Endothelial cell of umbilical vein (primary cell): ENCODE measurements at regions of chr7 and their contacts with region 1.

Region 1: GRCh38 chr7:138738551-138739335 is 37.6 kb upstream of the SVOPL start:
- DNase-seq: peak; percentile 89
- H3K4me3 ChIP-seq: no peak overlapping the region
- H3K27ac ChIP-seq: no peak overlapping the region
- H3K4me1 ChIP-seq: no peaks in the 10 kb centered on the region
- H3K27me3 ChIP-seq: no peaks in the 10 kb centered on the region
- CTCF ChIP-seq: peak; percentile 89 to 96
- POLR2A ChIP-seq: no peak

Region 2: DNA sequence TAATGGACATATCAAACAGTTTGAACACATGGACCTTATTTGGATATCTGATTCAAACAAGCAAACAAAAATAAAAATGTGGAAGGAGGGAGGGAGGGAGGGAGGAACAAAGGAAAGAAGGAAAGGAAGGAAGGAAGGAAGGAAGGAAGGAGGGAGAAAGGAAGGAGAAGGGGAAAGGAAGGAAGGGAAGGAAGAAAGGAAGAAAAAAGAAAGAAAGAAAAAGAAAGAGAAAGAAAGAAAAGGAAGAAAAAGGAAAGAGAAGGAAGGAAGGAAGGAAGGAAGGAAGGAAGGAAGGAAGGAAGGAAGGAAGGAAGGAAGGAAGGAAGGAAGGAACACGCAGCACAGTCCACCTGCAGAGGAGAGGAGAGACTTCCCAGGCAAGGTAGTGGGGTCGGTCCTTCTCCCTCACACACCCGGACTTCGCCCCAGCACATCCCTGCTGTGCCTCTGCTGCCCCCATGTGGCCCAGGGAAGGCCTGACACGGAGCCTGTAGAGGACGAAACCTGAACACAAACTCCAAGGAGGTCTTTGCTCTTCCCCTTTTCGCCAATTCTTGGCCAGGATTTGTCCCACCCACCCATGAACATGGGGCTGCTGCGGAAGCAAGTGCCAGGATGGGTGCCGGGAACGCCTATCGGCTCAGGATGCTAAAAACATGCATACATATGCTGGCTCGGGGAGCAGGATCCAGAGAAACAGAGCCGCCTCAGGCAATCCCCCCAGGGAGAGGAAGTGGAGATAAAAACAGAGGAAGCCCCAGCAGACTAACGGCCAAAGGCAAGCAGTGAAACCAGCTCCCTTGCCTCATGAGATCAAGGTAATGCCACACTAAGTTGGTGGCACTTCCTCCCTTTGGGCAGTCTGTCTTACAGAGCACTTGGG is 839.7 kb before region 1 on chr7:
- CTCF ChIA-PET with region 1: interaction called, 17 read pairs
- POLR2A ChIA-PET with region 1: no interaction called
- dilution Hi-C with region 1: no loop called
- intact Hi-C with region 1: no loop called
- DNase-seq: peak; percentile 73
- H3K4me3 ChIP-seq: no peak overlapping the region
- H3K27ac ChIP-seq: no peak overlapping the region
- H3K4me1 ChIP-seq: peaks cover 2% of the 10 kb centered on the region
- H3K27me3 ChIP-seq: no peaks in the 10 kb centered on the region
- CTCF ChIP-seq: peak; percentile 91 to 98
- POLR2A ChIP-seq: no peak

Region 3: DNA sequence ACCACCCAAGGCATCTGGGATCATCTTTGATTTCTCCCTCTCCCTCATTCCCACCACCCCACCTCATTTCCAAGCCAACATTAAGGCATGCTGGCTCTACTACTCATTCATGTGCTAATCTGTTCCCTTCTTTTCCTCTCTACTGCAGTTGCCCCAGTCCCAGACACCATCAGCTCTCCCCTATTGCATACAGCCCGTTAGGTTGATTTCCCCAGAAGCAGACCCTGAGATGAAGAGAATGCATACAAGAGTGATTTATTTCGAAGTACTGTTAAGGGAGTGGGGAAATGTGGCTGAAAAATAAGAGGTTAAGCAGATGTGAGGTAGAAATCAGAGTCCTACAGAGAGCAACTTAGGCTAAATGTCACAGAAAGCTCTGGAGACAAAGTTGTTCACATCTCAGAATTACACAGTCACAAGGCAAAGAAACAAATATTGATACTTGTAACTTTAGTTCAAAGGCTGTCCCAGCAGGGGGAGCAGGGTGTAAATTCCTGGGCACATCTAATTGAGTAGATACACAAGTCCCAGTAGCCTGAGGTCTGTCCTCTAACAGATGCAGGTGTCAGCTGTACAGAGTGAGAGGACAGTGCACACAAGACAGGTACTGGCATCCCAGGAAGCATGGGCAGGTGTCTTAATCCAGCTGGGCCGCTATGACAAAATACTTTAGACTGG is 641.5 kb before region 1 on chr7:
- CTCF ChIA-PET with region 1: interaction called, 11 read pairs
- POLR2A ChIA-PET with region 1: no interaction called
- dilution Hi-C with region 1: no loop called
- intact Hi-C with region 1: loop called (anchors 1 kb)
- DNase-seq: peak; percentile 6
- H3K4me3 ChIP-seq: no peak overlapping the region
- H3K27ac ChIP-seq: no peak overlapping the region
- H3K4me1 ChIP-seq: no peaks in the 10 kb centered on the region
- H3K27me3 ChIP-seq: no peaks in the 10 kb centered on the region
- CTCF ChIP-seq: no peak
- POLR2A ChIP-seq: no peak

Region 4: DNA sequence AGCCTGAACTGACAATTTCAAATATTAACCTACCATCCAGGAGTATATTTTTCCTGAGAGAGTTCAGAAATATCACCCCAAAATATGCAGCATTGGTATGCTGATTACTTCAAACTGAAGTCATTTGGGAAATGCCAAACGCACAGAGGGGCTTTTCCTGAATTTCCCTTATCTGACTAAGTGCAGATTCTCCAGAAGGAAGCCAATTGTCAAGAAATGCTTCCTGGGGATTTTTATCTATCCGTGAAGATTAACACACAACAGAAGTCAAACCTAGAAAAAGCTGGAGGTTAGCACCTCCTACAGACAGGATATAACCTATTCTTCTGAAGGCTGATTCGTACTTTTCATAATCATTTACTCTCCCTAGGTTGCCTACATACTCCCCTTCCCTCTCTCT is 571.5 kb before region 1 on chr7:
- CTCF ChIA-PET with region 1: interaction called, 345 read pairs
- POLR2A ChIA-PET with region 1: no interaction called
- dilution Hi-C with region 1: no loop called
- intact Hi-C with region 1: no loop called
- DNase-seq: peak; percentile 9
- H3K4me3 ChIP-seq: no peak overlapping the region
- H3K27ac ChIP-seq: no peak overlapping the region
- H3K4me1 ChIP-seq: no peaks in the 10 kb centered on the region
- H3K27me3 ChIP-seq: no peaks in the 10 kb centered on the region
- CTCF ChIP-seq: no peak
- POLR2A ChIP-seq: no peak

Region 5: DNA sequence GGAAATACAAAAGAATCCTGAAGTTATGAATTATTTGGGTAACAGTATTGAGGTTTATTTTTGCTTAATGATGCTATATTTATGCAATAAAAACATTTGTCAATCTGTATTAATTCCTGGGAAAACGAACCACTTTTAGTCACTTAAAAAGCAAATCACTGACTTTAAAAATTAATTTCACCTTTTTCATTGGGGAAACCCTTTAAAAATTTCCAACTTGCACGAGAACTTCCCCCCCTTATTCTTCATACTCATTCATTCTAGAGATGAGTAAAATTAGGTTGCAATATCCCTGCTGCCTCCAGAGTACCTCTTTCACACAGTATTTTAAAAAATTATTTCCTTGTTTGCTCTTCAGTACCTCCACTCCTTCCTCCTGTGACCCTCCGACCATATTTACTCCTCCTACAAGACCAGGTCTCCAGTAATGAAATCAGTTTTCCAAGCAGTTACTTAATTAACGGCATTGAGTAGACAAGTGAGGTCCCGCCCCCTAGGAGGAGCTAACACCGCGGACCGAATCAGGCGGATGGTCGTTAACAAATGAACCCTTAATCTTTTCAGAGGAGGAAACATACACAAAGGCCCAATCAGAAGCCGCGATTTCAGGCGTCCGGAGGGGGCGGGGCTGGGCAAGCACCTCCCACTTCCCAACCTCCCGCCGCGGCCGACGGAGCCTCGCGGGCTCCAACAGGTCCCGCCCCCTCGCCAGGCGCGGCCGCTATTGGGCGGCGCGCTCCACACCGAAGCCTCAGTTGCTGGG is 279.1 kb before region 1 on chr7:
- CTCF ChIA-PET with region 1: interaction called, 13 read pairs
- POLR2A ChIA-PET with region 1: no interaction called
- dilution Hi-C with region 1: no loop called
- intact Hi-C with region 1: loop called (anchors 1 kb)
- DNase-seq: peak; percentile 99
- H3K4me3 ChIP-seq: peak overlapping the region; percentile 21 to 54 (median 52)
- H3K27ac ChIP-seq: no peak overlapping the region
- H3K4me1 ChIP-seq: peaks cover 5% of the 10 kb centered on the region
- H3K27me3 ChIP-seq: no peaks in the 10 kb centered on the region
- CTCF ChIP-seq: no peak
- POLR2A ChIP-seq: no peak

Region 6: GRCh38 chr7:138515001-138515528 is 223.7 kb before region 1 on chr7:
- CTCF ChIA-PET with region 1: no interaction called
- POLR2A ChIA-PET with region 1: no interaction called
- dilution Hi-C with region 1: no loop called
- intact Hi-C with region 1: no loop called
- DNase-seq: no peak
- H3K4me3 ChIP-seq: no peak overlapping the region
- H3K27ac ChIP-seq: no peak overlapping the region
- H3K4me1 ChIP-seq: no peaks in the 10 kb centered on the region
- H3K27me3 ChIP-seq: no peaks in the 10 kb centered on the region
- CTCF ChIP-seq: no peak
- POLR2A ChIP-seq: no peak